ENCODE measurements at regions of chr14 and their contacts with region 1.

Region 1: GRCh38 chr14:64434528-64434927 is 30.8 kb upstream of the AKAP5 start:
- DNase-seq: no peak
- ATAC-seq: no peak
- H3K4me3 Mint-ChIP-seq: no peak overlapping the region
- H3K27ac Mint-ChIP-seq: no peak overlapping the region
- H3K4me1 Mint-ChIP-seq: peaks cover 19% of the 10 kb centered on the region
- H3K27me3 Mint-ChIP-seq: no peaks in the 10 kb centered on the region

Region 2: DNA sequence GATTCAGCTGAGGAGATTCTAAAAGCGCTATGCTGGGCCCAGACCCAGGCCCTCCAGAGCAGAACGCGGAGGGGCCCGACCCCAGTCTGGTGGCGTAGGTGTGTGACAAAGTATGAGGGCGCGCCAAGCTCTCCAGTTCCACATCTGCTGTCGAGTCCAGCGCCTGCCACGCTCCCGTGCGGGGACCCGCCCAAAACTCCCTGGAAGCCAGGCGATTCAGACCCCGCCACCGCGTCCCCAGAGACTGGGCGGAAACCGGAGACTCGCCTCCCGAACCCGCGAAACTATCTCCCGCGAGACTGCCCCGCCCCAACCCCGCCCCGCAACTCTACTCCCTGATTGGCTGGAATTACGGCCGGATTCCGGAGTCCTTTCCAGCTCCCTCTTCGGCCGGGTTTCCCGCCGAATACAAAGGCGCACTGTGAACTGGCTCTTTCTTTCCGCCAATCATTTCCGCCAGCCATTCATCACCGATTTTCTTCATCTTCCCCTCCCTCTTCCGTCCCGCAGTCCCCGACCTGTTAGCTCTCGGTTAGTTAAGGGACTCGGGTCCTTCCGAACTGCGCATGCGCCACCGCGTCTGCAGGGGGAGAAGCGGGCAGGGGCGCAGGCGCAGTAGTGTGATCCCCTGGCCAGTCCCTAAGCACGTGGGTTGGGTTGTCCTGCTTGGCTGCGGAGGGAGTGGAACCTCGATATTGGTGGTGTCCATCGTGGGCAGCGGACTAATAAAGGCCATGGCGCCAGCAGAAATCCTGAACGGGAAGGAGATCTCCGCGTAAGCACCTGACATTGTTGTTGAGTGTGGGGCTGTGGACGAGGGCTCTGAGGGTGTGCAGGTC is 46.6 kb before region 1 on chr14 and contains the start of gene MTHFD1:
- CTCF ChIA-PET with region 1: interaction called, 10 read pairs
- DNase-seq: peak; percentile 99
- ATAC-seq: peak; percentile 91
- H3K4me3 Mint-ChIP-seq: peak within 1 kb of the TSS; percentile 91
- H3K27ac Mint-ChIP-seq: peak within 1 kb of the TSS; percentile 97
- H3K4me1 Mint-ChIP-seq: peaks cover 46% of the 10 kb centered on the region
- H3K27me3 Mint-ChIP-seq: no peaks in the 10 kb centered on the region
- total RNA-seq, gene MTHFD1: 223 to 316 TPM

Region 3: DNA sequence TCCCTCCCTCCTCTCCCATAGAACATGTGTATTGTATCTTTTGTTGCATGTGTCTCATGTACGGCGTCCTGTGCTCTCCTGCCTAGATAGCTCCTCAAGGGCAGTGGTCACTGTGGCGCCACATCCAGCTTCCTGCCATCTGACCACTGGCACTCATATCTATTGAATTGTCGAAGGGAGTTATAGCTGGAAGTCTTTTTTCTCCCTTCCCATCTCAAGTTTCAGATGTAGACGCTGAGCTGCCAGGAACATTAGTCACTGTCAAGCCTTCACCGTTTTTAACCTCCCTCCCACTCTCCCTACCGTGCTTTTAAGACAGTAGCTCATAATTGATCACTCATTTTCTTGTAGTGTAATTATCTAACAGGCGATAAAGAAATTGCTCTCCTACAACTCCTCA is 13.4 kb before region 1 on chr14:
- CTCF ChIA-PET with region 1: interaction called, 11 read pairs
- DNase-seq: no peak
- ATAC-seq: no peak
- H3K4me3 Mint-ChIP-seq: no peak overlapping the region
- H3K27ac Mint-ChIP-seq: peak overlapping the region; percentile 63
- H3K4me1 Mint-ChIP-seq: peaks cover 35% of the 10 kb centered on the region
- H3K27me3 Mint-ChIP-seq: no peaks in the 10 kb centered on the region

Region 4: DNA sequence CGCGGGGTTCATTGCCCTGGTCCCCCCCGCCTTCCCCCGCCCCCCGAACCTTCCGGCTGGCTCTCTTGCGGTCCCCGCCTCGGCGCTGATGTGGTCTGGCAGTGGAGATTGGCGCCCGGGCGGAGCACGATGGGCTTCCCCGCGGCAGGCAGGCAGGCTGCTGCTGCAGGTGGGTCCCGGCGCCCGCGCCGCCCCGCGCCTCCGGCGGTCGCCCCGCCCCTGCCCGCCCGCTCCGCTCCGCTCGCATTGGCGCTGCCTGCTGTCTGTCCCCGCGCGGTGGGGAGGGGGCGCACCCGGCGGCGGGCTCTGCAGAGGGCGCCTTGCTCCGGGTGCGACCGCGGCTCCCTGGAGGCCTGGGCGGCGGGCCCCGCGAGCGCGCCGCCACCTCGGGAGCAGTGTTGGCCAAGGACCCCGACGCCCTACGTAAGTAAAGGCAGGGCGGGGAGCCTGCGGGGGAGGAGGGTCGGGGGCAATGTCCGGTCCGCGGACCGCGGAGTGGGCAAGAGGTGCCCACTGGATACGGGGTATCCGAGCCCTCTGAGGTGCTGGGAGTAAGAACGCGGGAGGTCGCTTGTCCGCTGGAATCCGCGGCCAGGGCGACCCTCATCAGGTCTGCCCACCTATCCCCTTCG is 30.8 kb after region 1 on chr14 and contains the start of gene AKAP5:
- CTCF ChIA-PET with region 1: interaction called, 20 read pairs
- DNase-seq: peak; percentile 71
- ATAC-seq: peak; percentile 91
- H3K4me3 Mint-ChIP-seq: peak within 1 kb of the TSS; percentile 79
- H3K27ac Mint-ChIP-seq: peak within 1 kb of the TSS; percentile 80
- H3K4me1 Mint-ChIP-seq: peaks cover 40% of the 10 kb centered on the region
- H3K27me3 Mint-ChIP-seq: no peaks in the 10 kb centered on the region
- total RNA-seq, gene AKAP5: 8.8 to 23.2 TPM

Region 5: GRCh38 chr14:64510825-64511671 is 76.5 kb after region 1 on chr14:
- CTCF ChIA-PET with region 1: interaction called, 17 read pairs
- DNase-seq: peak; percentile 79
- ATAC-seq: peak; percentile 35
- H3K4me3 Mint-ChIP-seq: peak overlapping the region; percentile 91
- H3K27ac Mint-ChIP-seq: peak overlapping the region; percentile 98
- H3K4me1 Mint-ChIP-seq: peaks cover 66% of the 10 kb centered on the region
- H3K27me3 Mint-ChIP-seq: no peaks in the 10 kb centered on the region

Region 6: DNA sequence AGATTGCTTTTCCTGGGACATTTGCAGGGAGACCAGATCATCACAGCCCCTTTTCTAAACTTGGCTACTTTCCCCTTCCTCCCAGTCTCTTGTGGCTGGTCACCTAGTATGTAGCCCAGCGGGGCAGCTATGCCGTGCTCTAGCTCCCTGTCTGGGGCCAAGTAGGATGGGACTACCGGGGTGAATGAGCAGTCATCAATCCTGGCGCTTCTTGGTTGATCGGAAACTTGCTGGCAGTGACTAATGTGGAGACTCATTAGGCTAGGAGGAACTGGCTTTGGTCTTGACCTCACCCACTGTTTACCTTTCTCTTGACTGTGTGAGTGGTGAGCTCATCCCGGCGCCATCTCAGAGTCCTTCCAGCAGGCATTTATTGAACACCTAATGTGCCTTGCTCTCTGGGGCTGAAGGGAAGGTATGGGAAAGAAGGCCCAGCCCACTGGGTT is 285.6 kb after region 1 on chr14:
- CTCF ChIA-PET with region 1: no interaction called
- DNase-seq: no peak
- ATAC-seq: no peak
- H3K4me3 Mint-ChIP-seq: no peak overlapping the region
- H3K27ac Mint-ChIP-seq: no peak overlapping the region
- H3K4me1 Mint-ChIP-seq: peaks cover 69% of the 10 kb centered on the region
- H3K27me3 Mint-ChIP-seq: no peaks in the 10 kb centered on the region

Measured in activated CD8-positive, alpha-beta memory T cell treated with anti-CD3 and anti-CD28 coated beads, Interleukin-2, amount 10 ng/mL, durations not matched to agents 7 days and 5 days (primary cell).